CD4-positive, alpha-beta T cell (primary cell): ENCODE measurements at regions of chr16 and their contacts with region 1.

Region 1: GRCh38 chr16:66608241-66609138 is 4.0 kb downstream of the CMTM3 start:
- DNase-seq: peak; percentile 71 to 91 (median 80)
- ATAC-seq: peak; percentile 34
- H3K4me3 ChIP-seq: no peak overlapping the region
- H3K4me3 Mint-ChIP-seq: peak overlapping the region; percentile 47
- H3K27ac ChIP-seq: no peak overlapping the region
- H3K27ac Mint-ChIP-seq: peak overlapping the region; percentile 83
- H3K4me1 ChIP-seq: peaks cover 46% of the 10 kb centered on the region
- H3K4me1 Mint-ChIP-seq: peaks cover 39% of the 10 kb centered on the region
- H3K27me3 ChIP-seq: no peaks in the 10 kb centered on the region
- H3K27me3 Mint-ChIP-seq: no peaks in the 10 kb centered on the region
- CTCF ChIP-seq: peak; percentile 87

Region 2: GRCh38 chr16:66521951-66522771 is 86.3 kb before region 1 on chr16:
- CTCF ChIA-PET with region 1: interaction called, 6 read pairs
- POLR2A ChIA-PET with region 1: interaction called, 14 read pairs
- intact Hi-C with region 1: no loop called
- DNase-seq: peak; percentile 41 to 93 (median 80)
- ATAC-seq: peak; percentile 76
- H3K4me3 ChIP-seq: peak overlapping the region; percentile 2
- H3K4me3 Mint-ChIP-seq: peak overlapping the region; percentile 74
- H3K27ac ChIP-seq: peak overlapping the region; percentile 14 to 49
- H3K27ac Mint-ChIP-seq: peak overlapping the region; percentile 93
- H3K4me1 ChIP-seq: peaks cover 84% of the 10 kb centered on the region
- H3K4me1 Mint-ChIP-seq: peaks cover 86% of the 10 kb centered on the region
- H3K27me3 ChIP-seq: no peaks in the 10 kb centered on the region
- H3K27me3 Mint-ChIP-seq: no peaks in the 10 kb centered on the region
- CTCF ChIP-seq: no peak

Region 3: GRCh38 chr16:66562407-66562806 is 46.1 kb before region 1 on chr16:
- CTCF ChIA-PET with region 1: interaction called, 29 read pairs
- POLR2A ChIA-PET with region 1: interaction called, 26 read pairs
- intact Hi-C with region 1: loop called (anchors 1 kb)
- DNase-seq: peak in 3 of 14 experiments; percentile 44 to 60 (median 54)
- ATAC-seq: peak; percentile 64
- H3K4me3 ChIP-seq: no peak overlapping the region
- H3K4me3 Mint-ChIP-seq: peak overlapping the region; percentile 37
- H3K27ac ChIP-seq: no peak overlapping the region
- H3K27ac Mint-ChIP-seq: peak overlapping the region; percentile 49
- H3K4me1 ChIP-seq: peaks cover 38% of the 10 kb centered on the region
- H3K4me1 Mint-ChIP-seq: peaks cover 65% of the 10 kb centered on the region
- H3K27me3 ChIP-seq: no peaks in the 10 kb centered on the region
- H3K27me3 Mint-ChIP-seq: no peaks in the 10 kb centered on the region
- CTCF ChIP-seq: peak; percentile 58

Region 4: GRCh38 chr16:66588981-66589713 is 19.3 kb before region 1 on chr16:
- CTCF ChIA-PET with region 1: interaction called, 17 read pairs
- POLR2A ChIA-PET with region 1: interaction called, 40 read pairs
- intact Hi-C with region 1: loop called (anchors 1 to 2 kb)
- DNase-seq: peak; percentile 45 to 87 (median 63)
- ATAC-seq: peak; percentile 93
- H3K4me3 ChIP-seq: no peak overlapping the region
- H3K4me3 Mint-ChIP-seq: peak overlapping the region; percentile 79
- H3K27ac ChIP-seq: no peak overlapping the region
- H3K27ac Mint-ChIP-seq: peak overlapping the region; percentile 52
- H3K4me1 ChIP-seq: peaks cover 26% of the 10 kb centered on the region
- H3K4me1 Mint-ChIP-seq: peaks cover 33% of the 10 kb centered on the region
- H3K27me3 ChIP-seq: no peaks in the 10 kb centered on the region
- H3K27me3 Mint-ChIP-seq: no peaks in the 10 kb centered on the region
- CTCF ChIP-seq: peak; percentile 74

Region 5: DNA sequence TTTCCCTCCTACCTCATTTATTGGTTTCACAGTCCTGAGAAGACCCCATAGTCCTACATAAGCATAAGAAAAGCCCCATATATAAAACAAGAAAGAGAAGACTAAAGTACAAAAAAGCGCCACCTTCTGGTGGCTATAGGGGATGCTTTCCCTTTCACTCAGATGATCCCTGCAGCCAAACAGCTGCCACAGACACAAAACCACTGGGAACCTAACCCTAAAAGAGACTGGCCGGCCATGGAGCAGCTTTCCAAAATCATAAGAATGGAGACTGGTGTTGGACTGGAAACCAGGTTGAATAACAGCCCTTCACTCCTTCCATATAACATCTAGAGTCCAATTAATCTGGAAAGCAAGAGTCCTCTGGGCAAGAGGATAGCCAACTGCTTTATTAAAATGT is 131.5 kb after region 1 on chr16:
- CTCF ChIA-PET with region 1: no interaction called
- POLR2A ChIA-PET with region 1: no interaction called
- intact Hi-C with region 1: loop called in 1 of 2 experiments (anchors 1 kb)
- DNase-seq: peak in 8 of 14 experiments; percentile 5 to 67 (median 18)
- ATAC-seq: peak; percentile 64
- H3K4me3 ChIP-seq: no peak overlapping the region
- H3K4me3 Mint-ChIP-seq: no peak overlapping the region
- H3K27ac ChIP-seq: no peak overlapping the region
- H3K27ac Mint-ChIP-seq: peak overlapping the region; percentile 45
- H3K4me1 ChIP-seq: peaks cover 17% of the 10 kb centered on the region
- H3K4me1 Mint-ChIP-seq: peaks cover 24% of the 10 kb centered on the region
- H3K27me3 ChIP-seq: no peaks in the 10 kb centered on the region
- H3K27me3 Mint-ChIP-seq: no peaks in the 10 kb centered on the region
- CTCF ChIP-seq: peak; percentile 70

Region 6: DNA sequence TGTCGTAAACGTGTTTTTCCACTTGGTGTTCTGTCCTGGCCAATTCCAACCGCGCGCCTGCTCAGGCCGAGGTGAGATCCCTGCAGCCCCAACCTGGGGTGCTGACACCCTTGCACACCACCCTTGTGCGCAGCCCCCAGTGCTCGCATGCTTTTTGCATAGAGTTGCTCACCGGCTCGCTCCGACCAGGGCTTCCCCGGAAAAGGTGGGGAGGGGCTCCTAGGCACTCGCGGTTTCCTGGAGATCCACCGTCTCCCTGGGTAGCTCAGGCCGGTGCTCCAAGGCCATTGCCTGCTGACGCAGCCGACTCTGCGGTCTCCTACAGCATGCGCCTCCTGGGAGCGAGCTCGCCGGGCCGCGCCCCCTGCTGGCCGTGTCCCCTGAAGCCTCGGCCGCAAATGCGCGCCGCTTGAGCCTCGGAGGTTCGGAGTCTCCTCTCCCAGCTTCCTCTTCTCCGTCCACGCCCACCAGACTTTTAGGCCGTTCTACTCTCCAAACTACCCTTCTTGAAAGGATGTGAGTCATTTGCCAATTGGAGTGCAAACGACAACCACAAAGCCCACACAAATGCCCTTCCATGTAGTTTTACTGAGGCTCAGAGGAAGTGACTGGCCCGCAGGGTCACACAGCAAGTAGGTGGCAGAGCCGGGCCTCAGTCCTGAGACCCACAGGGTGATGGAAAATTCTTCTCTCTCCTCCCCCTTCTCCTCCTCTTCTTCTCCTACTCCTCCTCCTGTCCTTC is 264.6 kb after region 1 on chr16:
- CTCF ChIA-PET with region 1: no interaction called
- POLR2A ChIA-PET with region 1: no interaction called
- intact Hi-C with region 1: loop called in 1 of 2 experiments (anchors 2 kb)
- DNase-seq: peak; percentile 75 to 94 (median 82)
- ATAC-seq: peak; percentile 90
- H3K4me3 ChIP-seq: peak overlapping the region; percentile 57
- H3K4me3 Mint-ChIP-seq: peak overlapping the region; percentile 75
- H3K27ac ChIP-seq: peak overlapping the region in 1 of 2 donors; percentile 24
- H3K27ac Mint-ChIP-seq: peak overlapping the region; percentile 32
- H3K4me1 ChIP-seq: peaks cover 26% of the 10 kb centered on the region
- H3K4me1 Mint-ChIP-seq: peaks cover 21% of the 10 kb centered on the region
- H3K27me3 ChIP-seq: no peaks in the 10 kb centered on the region
- H3K27me3 Mint-ChIP-seq: no peaks in the 10 kb centered on the region
- CTCF ChIP-seq: peak; percentile 92